ENCODE measurements at regions of chr2 and their contacts with region 1.

Region 1: DNA sequence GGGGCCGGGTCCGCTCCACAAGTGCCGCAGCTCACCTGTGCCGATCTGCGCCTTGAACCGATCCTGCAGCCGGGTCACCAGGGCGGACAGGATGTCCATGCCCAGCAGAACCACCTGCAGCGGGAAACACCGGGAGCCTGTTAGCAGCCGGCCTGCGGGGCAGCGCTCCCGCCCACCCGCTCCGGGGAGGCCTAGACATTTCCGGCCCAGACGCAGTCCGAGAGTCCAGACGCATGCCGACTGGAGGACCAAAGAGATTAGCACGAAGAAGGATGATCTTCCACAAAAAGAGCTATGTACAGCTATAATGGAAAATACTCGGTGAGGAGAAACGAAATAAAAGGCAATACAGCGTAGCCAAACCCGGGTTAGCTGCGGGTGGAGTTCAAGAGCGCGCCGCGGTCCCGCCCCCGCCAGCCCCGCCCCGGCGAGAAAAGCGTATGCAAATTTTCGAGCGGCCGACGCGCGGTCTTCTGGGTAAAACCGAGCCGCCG is 421 bp upstream of the RNU4ATAC start:
- DNase-seq: peak; percentile 47 to 88
- H3K4me3 ChIP-seq: peak overlapping the region; percentile 86 to 95 (median 92)
- H3K27ac ChIP-seq: peak overlapping the region; percentile 99
- H3K4me1 ChIP-seq: peaks cover 0 to 11% (median 5%) of the 10 kb centered on the region in 4 experiments; a peak in 3 of 7 replicates
- H3K27me3 ChIP-seq: no peaks in the 10 kb centered on the region
- CTCF ChIP-seq: no peak
- EP300 ChIP-seq: no peak
- POLR2A ChIP-seq: no peak
- RAD21 ChIP-seq: no peak

Region 2: GRCh38 chr2:120892967-120893667 is 637.1 kb before region 1 on chr2:
- CTCF ChIA-PET with region 1: no interaction called
- POLR2A ChIA-PET with region 1: no interaction called
- DNase-seq: no peak
- H3K4me3 ChIP-seq: peak overlapping the region in 3 of 4 experiments; percentile 23 to 44 (median 27); a peak in 4 of 8 replicates
- H3K27ac ChIP-seq: no peak overlapping the region; the same call in 1 of the 2 replicates
- H3K4me1 ChIP-seq: peaks cover 6 to 23% (median 14%) of the 10 kb centered on the region in 4 experiments; a peak in 6 of 7 replicates
- H3K27me3 ChIP-seq: no peaks in the 10 kb centered on the region; a peak in 1 of 7 replicates
- CTCF ChIP-seq: no peak
- EP300 ChIP-seq: no peak
- POLR2A ChIP-seq: no peak
- RAD21 ChIP-seq: no peak

Region 3: GRCh38 chr2:121442889-121443288 is 87.4 kb before region 1 on chr2:
- CTCF ChIA-PET with region 1: no interaction called
- POLR2A ChIA-PET with region 1: no interaction called
- DNase-seq: no peak
- H3K4me3 ChIP-seq: no peak overlapping the region
- H3K27ac ChIP-seq: no peak overlapping the region
- H3K4me1 ChIP-seq: no peaks in the 10 kb centered on the region
- H3K27me3 ChIP-seq: no peaks in the 10 kb centered on the region
- CTCF ChIP-seq: no peak
- EP300 ChIP-seq: no peak
- POLR2A ChIP-seq: no peak
- RAD21 ChIP-seq: no peak

Region 4: DNA sequence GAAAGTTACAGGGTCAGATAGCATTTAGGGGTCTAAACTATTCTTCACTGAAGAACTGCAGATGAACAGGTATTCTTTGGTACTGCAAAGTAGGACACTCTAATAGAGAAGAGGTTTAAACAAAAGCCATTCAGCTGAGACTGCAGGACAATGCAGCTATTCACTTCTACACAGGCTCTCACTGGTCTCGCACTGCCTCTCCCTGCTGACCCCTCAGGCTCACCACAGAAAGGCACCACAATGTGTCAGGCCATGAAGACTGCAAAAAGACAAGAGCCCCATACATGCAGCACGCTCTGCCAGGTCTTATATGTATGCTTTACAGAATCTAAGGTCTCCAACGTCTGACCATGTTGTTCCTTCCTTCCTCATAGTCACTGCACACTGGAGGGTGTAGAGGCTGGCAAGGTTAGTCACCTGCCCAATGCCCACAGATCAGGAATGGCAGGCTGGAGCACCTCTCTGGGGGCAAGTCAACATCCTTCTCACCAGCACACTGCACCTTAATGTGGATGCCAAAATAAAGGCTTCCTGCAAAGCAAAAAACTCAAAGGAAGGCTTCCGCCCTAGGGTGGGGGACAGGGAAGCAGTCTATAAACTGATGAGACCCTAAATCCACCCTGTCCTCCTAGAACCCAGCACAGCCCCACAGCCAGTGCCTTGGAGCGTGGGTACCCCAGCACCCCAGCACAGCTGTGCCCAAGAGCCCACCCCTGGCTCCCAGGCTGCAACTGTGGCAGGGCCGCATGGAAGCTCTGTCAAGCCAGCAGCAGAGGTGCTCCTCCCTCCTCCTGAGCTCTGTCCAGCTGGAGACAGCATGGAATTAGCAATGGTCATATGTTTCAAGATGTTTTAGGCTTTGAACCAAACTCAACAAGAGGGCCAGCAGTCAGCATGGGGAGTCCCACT is 10.3 kb before region 1 on chr2:
- CTCF ChIA-PET with region 1: interaction called, 3 read pairs
- POLR2A ChIA-PET with region 1: interaction called, 13 read pairs
- DNase-seq: no peak
- H3K4me3 ChIP-seq: no peak overlapping the region
- H3K27ac ChIP-seq: no peak overlapping the region
- H3K4me1 ChIP-seq: no peaks in the 10 kb centered on the region
- H3K27me3 ChIP-seq: no peaks in the 10 kb centered on the region
- CTCF ChIP-seq: no peak
- EP300 ChIP-seq: no peak
- POLR2A ChIP-seq: no peak
- RAD21 ChIP-seq: no peak

Region 5: DNA sequence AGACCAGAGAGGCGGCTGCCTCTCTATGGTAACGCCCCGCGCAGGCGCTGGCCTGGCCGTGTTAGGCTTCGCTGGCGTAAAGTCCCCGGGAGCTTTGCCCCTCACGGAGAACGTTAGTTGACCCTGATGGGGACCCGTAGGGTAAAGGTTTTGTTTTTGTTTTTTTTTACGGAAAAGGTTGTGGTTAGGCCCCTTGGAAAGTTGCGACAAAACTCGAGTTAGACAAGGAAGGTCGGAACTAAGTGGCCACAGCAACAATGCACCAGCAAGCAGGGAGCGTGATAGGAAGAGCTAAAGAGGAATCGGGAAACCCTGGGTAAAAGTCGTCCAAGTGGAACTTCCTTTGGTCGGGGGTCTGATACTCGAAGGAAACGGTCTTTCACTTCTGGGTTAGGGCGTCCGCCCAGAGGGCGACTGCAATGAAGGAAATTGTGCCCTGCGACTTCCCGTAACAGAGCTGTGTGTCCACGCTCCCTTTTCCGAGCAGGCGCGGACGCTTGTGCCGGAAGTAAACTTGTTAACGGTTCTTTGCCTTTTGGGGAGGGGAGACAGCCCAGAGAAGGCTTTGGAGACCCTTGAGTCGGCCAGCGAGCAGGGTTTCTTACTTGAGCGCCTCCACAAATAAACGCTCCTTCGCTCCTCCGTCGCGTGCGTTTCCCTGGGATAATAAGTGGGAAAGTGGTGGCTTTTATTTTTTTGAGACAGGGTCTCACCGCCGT is 119.5 kb after region 1 on chr2:
- CTCF ChIA-PET with region 1: interaction called, 3 read pairs
- POLR2A ChIA-PET with region 1: interaction called, 40 read pairs
- DNase-seq: peak; percentile 91
- H3K4me3 ChIP-seq: peak overlapping the region; percentile 77 to 91 (median 82)
- H3K27ac ChIP-seq: peak overlapping the region; percentile 81
- H3K4me1 ChIP-seq: peaks cover 0 to 5% (median 2%) of the 10 kb centered on the region in 4 experiments; a peak in 3 of 7 replicates
- H3K27me3 ChIP-seq: no peaks in the 10 kb centered on the region
- CTCF ChIP-seq: no peak
- EP300 ChIP-seq: no peak
- POLR2A ChIP-seq: peak in 1 of 2 experiments; percentile 59; a peak in 2 of 3 replicates
- RAD21 ChIP-seq: 0 out of 4 replicates have a peak, but pooled peaks of 1 of the 2 experiments have one; percentile 1

Region 6: GRCh38 chr2:121689356-121689755 is 159.1 kb after region 1 on chr2:
- CTCF ChIA-PET with region 1: interaction called, 4 read pairs
- POLR2A ChIA-PET with region 1: interaction called, 38 read pairs
- DNase-seq: no peak
- H3K4me3 ChIP-seq: no peak overlapping the region
- H3K27ac ChIP-seq: no peak overlapping the region
- H3K4me1 ChIP-seq: peaks cover 4 to 15% (median 10%) of the 10 kb centered on the region in 4 experiments
- H3K27me3 ChIP-seq: no peaks in the 10 kb centered on the region
- CTCF ChIP-seq: peak in 2 of 3 experiments; percentile 25 to 28; a peak in 2 of 4 replicates
- EP300 ChIP-seq: no peak
- POLR2A ChIP-seq: no peak
- RAD21 ChIP-seq: peak; percentile 28 to 40; a peak in 2 of 4 replicates

Region 7: GRCh38 chr2:121722479-121722878 is 192.2 kb after region 1 on chr2:
- CTCF ChIA-PET with region 1: interaction called, 18 read pairs
- POLR2A ChIA-PET with region 1: interaction called, 10 read pairs
- DNase-seq: no peak
- H3K4me3 ChIP-seq: no peak overlapping the region
- H3K27ac ChIP-seq: no peak overlapping the region
- H3K4me1 ChIP-seq: no peaks in the 10 kb centered on the region
- H3K27me3 ChIP-seq: no peaks in the 10 kb centered on the region
- CTCF ChIP-seq: no peak
- EP300 ChIP-seq: no peak
- POLR2A ChIP-seq: no peak
- RAD21 ChIP-seq: no peak